Activated CD4-positive, alpha-beta memory T cell treated with anti-CD3 and anti-CD28 coated beads for 36 hours (primary cell): ENCODE measurements at regions of chr11 and their contacts with region 1.

Region 1: DNA sequence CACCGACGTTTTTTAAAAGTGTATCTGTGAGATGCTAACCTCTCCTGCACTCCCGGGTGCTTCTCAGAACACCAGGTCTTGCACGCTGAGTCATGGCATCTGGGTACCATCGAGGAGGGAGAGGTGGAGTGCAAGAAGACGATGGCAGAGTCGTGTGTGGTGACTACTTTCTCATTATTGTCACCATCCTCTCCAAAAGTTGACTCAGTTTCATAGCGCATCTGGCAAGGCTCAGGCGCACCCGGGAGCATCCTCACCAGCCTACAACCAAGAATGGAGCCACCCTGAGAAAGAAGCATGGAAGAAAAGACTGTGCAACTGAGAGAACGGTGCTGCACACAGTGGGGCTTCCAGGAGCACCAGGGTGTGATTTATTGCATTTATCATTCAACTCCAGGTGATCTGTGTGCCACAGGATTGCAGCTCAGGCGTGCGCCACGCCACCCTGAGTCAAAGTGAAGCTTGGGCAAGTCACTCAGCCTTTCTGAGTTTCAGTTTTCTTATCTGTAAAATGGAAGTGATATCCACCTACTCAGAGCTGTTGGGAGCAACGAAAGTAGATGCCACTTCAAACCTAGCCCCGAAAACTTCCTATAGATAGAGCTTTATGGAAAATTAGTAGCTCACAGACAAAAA is 65.4 kb downstream of the LINC01488 start:
- DNase-seq: peak; percentile 80
- H3K4me3 Mint-ChIP-seq: peak overlapping the region; percentile 9
- H3K27ac Mint-ChIP-seq: peak overlapping the region; percentile 82
- H3K4me1 Mint-ChIP-seq: peaks cover 26% of the 10 kb centered on the region
- H3K27me3 Mint-ChIP-seq: peaks cover 51% of the 10 kb centered on the region

Region 2: DNA sequence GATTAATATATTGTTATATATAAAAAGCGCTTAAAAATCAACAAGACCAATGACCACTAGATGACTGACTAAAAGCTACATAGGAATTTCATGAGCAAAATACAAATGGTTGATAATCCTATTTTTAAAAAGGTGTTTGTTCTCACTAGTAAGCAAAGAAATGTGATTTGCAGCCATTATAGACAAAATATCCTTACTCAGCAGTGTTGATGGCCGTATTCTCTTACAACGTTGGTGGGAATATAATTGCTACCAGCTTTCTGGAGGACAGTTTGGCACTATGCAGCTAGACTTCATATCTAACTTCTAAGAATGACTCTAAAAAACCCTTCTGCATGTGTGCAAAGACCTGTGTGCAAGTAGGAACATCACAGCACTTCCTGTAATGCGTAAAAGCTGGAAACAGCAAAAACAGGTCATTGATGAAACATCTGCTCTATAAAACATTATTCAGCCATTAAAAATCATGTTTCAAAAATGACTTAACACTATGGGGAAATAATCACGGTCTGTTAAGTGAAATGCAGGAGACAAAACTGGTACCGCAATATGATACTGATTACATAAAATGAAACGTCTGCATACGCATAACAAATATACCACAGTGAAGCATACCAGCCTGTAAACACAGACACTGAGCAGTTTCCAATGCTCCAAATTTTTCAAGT is 135.5 kb before region 1 on chr11:
- CTCF ChIA-PET with region 1: no interaction called
- POLR2A ChIA-PET with region 1: interaction called, 3 read pairs
- intact Hi-C with region 1: loop called (anchors 1 kb)
- DNase-seq: no peak
- H3K4me3 Mint-ChIP-seq: no peak overlapping the region
- H3K27ac Mint-ChIP-seq: no peak overlapping the region
- H3K4me1 Mint-ChIP-seq: peaks cover 10% of the 10 kb centered on the region
- H3K27me3 Mint-ChIP-seq: peaks cover 7% of the 10 kb centered on the region

Region 3: DNA sequence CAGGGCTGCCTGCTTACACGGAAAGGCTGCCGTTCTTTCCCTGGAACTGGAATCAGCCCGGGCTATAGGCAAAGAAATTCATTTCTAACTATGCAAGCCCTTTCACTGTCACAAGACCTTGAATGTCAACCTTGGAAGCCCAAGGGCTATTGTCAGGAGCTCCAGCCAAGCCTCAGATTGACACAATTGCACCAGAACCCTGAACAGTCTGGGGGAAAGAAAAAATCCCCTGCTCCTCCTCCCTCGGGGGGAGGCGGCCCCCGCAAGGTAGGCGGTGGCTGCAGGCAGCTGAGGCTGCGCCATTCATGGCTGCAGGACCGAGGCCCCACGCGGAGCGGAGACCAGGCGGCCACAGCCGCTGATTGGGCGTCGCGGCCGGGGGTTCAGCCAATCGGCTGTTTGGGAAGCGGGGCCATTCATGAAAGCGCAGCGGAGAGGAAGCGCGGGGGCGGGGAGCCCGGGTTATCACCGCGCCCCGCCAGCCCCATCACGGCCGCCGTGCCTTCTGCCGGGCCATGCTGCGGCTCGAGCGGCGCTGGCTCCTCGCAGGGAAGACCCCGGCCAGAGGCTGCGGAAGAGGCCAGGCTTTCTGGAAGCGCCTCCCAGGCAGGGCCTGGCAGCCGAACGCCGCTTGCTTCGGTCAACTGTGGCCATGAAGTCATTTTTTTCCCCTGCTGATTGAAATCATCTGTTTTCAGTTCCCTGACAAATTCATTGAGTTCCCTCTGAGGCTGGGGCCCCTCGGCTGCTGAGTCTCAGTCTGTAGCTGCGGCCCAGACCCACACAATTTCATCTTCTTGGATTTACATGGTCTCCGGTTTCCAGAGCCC is 103.5 kb before region 1 on chr11:
- CTCF ChIA-PET with region 1: no interaction called
- POLR2A ChIA-PET with region 1: interaction called, 5 read pairs
- intact Hi-C with region 1: loop called (anchors 1 kb)
- DNase-seq: peak; percentile 84
- H3K4me3 Mint-ChIP-seq: peak overlapping the region; percentile 45
- H3K27ac Mint-ChIP-seq: no peak overlapping the region
- H3K4me1 Mint-ChIP-seq: peaks cover 13% of the 10 kb centered on the region
- H3K27me3 Mint-ChIP-seq: peaks cover 17% of the 10 kb centered on the region

Region 4: DNA sequence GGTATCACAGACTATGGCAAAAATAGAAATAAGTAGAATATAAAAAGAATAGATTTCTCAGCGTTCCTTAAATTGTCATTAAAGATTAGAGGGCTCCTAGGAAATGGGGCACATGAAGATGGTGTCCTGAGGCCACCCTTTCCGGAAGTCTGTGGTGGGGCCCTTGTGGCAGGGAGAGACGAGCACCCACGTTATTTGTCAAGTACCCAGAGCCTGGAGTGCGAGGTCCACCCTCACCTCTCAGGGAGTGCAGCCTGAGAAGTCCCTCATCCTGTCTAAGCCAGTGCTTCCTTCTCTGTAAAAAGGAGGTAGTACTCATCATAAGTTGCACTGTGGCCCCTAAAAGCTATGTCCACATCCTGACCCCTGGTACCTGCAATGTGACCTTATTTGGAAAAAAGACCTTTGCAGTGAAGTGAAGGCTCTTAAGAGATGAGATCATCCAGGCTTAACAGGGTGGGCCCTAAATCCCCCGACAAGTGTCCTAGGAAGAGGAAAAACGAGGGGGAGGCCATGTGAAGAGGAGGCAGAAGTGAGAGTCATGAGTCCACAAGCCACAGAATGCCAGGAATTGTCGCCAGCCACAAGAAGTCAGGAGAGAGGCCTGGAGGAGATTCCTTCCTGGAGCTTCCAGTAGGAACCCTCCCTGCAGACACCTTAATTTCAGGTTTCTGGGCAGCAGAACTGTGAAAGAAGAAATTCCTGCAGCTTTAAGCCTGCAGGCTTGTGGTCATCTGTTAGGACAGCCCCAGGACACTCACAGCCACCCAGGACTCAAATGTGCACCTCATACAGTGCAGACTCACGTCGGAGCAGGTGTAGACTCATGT is 17.3 kb after region 1 on chr11:
- CTCF ChIA-PET with region 1: no interaction called
- POLR2A ChIA-PET with region 1: no interaction called
- intact Hi-C with region 1: no loop called
- DNase-seq: no peak
- H3K4me3 Mint-ChIP-seq: no peak overlapping the region
- H3K27ac Mint-ChIP-seq: no peak overlapping the region
- H3K4me1 Mint-ChIP-seq: peaks cover 5% of the 10 kb centered on the region
- H3K27me3 Mint-ChIP-seq: peaks cover 18% of the 10 kb centered on the region